WTC11 (cell line): ENCODE measurements at regions of chr21 and their contacts with region 1.

Region 1: GRCh38 chr21:45357436-45358260 is 47.3 kb upstream of the COL18A1 start:
- DNase-seq: no peak
- ATAC-seq: peak; percentile 38
- H3K4me3 Mint-ChIP-seq: no peak overlapping the region
- H3K27ac Mint-ChIP-seq: no peak overlapping the region; the same call in 1 of the 2 replicates
- H3K4me1 Mint-ChIP-seq: peaks cover 35% of the 10 kb centered on the region
- H3K27me3 Mint-ChIP-seq: no peaks in the 10 kb centered on the region
- CTCF ChIP-seq: no peak

Region 2: DNA sequence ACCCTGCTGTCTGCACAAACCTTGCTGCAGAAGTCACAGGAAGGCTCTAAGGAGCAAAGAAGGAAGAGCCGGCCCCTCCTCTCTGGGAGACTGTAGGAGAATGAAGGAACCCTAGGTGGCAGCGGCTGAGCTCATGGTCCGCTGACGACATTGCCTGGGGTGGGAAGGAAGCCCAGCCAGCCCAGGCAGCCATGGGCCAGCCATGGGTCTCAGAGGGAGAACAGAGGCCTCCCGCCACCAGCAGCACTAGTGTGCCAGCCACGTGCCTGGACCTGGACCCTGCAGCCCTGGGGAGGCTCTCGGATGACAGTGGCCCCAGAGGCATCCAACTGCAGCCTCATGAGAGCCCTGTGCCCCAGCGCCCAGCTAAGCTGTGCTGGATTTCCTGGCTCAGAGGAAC is 20.8 kb before region 1 on chr21:
- CTCF ChIA-PET with region 1: interaction called, 10 read pairs
- POLR2A ChIA-PET with region 1: no interaction called
- DNase-seq: no peak
- ATAC-seq: peak; percentile 75
- H3K4me3 Mint-ChIP-seq: no peak overlapping the region
- H3K27ac Mint-ChIP-seq: no peak overlapping the region
- H3K4me1 Mint-ChIP-seq: peaks cover 18% of the 10 kb centered on the region
- H3K27me3 Mint-ChIP-seq: peaks cover 3% of the 10 kb centered on the region
- CTCF ChIP-seq: no peak

Region 3: GRCh38 chr21:45390121-45390751 is 32.6 kb after region 1 on chr21:
- CTCF ChIA-PET with region 1: no interaction called
- POLR2A ChIA-PET with region 1: no interaction called
- DNase-seq: no peak
- ATAC-seq: no peak
- H3K4me3 Mint-ChIP-seq: no peak overlapping the region
- H3K27ac Mint-ChIP-seq: no peak overlapping the region
- H3K4me1 Mint-ChIP-seq: no peaks in the 10 kb centered on the region; the same call in 1 of the 2 replicates
- H3K27me3 Mint-ChIP-seq: peaks cover 4% of the 10 kb centered on the region; the same call in 1 of the 2 replicates
- CTCF ChIP-seq: no peak

Region 4: GRCh38 chr21:45427331-45428271 is 70.0 kb after region 1 on chr21:
- CTCF ChIA-PET with region 1: interaction called, 10 read pairs
- POLR2A ChIA-PET with region 1: no interaction called
- DNase-seq: peak; percentile 66
- ATAC-seq: peak; percentile 46
- H3K4me3 Mint-ChIP-seq: no peak overlapping the region
- H3K27ac Mint-ChIP-seq: peak overlapping the region; percentile 70
- H3K4me1 Mint-ChIP-seq: peaks cover 41% of the 10 kb centered on the region
- H3K27me3 Mint-ChIP-seq: no peaks in the 10 kb centered on the region
- CTCF ChIP-seq: no peak